Ascending aorta (tissue), 2 donors: ENCODE measurements at regions of chr7 and their contacts with region 1.

Region 1: GRCh38 chr7:50595491-50596102 is 30.4 kb upstream of the DDC start:
- DNase-seq: no peak
- H3K4me3 ChIP-seq: no peak overlapping the region
- H3K27ac ChIP-seq: no peak overlapping the region
- H3K4me1 ChIP-seq: no peaks in the 10 kb centered on the region
- H3K27me3 ChIP-seq: no peaks in the 10 kb centered on the region
- CTCF ChIP-seq: peak; percentile 22 to 65 (median 49)

Region 2: DNA sequence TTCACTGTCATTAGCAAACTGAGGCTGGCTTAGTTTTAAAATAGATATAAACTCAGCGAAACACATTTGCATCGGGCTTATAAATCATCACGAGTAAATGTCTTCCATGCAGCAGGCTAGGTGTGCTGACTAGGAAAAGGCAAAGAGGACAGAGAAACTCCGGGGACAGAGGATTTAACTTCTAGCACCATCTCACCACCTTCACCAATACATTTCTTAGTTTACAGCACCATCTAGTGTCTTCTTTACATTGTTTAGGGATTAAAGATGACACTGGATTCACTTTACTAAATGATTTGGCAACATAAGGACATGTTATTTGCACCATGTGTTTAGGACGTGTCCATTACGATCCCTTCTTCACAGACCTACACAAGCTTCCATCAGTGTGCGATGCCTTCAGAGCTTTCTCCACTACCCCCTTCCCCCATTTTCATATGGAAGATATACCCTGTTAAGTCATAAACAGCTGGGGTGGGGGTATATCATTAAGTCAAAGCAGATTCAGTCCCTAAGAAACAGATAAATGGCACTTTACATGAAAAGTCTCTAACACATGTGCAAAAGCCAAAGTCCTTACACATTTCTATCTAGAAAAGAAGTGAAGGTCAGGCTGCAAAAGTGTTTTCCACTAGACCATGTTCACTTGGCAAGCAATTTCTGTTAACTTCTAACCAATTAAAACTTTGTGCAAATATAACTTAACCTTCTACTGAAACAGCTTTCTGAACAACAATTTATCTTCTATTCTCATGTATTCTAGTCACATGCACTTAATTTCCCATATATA is 83.8 kb after region 1 on chr7:
- intact Hi-C with region 1: loop called (anchors 5 kb)
- DNase-seq: no peak
- H3K4me3 ChIP-seq: no peak overlapping the region
- H3K27ac ChIP-seq: no peak overlapping the region
- H3K4me1 ChIP-seq: peaks cover 0 to 27% of the 10 kb centered on the region in 2 donors
- H3K27me3 ChIP-seq: no peaks in the 10 kb centered on the region
- CTCF ChIP-seq: peak; percentile 21 to 42 (median 34)

Region 3: GRCh38 chr7:51067757-51068156 is 472.2 kb after region 1 on chr7:
- intact Hi-C with region 1: loop called (anchors 5 kb)
- DNase-seq: peak in 1 of 2 donors; percentile 71
- H3K4me3 ChIP-seq: peak overlapping the region in 1 of 2 donors; percentile 40
- H3K27ac ChIP-seq: no peak overlapping the region
- H3K4me1 ChIP-seq: no peaks in the 10 kb centered on the region
- H3K27me3 ChIP-seq: no peaks in the 10 kb centered on the region
- CTCF ChIP-seq: peak; percentile 23 to 71 (median 44)

Region 4: DNA sequence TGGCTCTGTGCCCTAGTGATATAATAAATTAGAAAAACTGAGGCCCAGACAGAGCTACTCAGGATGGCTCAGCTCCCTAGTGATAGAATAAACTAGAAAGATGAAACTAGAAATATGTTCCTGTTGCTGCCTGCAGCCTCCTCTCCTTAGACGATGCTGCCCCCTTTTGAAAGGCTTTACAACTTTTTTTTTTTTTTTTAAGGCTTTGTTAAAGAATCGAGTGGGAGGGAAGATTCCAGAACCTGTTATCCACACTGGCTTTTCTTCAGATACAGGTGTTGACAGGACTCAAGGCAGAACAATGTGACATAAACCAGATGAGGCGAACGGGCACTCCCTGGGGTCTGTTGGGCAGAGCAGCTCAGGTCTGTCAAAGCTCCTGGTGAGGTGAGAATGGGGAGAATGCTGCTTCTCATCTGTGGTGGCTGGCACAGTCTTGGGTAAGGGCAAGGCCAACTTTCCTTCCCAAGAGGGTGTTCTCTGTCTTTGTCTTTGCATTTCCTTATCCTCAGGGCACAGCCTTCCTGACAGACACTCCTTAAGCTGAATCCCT is 545.9 kb after region 1 on chr7:
- intact Hi-C with region 1: loop called (anchors 10 kb)
- DNase-seq: no peak
- H3K4me3 ChIP-seq: no peak overlapping the region
- H3K27ac ChIP-seq: no peak overlapping the region
- H3K4me1 ChIP-seq: no peaks in the 10 kb centered on the region
- H3K27me3 ChIP-seq: no peaks in the 10 kb centered on the region
- CTCF ChIP-seq: peak; percentile 10 to 72 (median 45)